ENCODE measurements at regions of chr1 and their contacts with region 1.

Region 1: DNA sequence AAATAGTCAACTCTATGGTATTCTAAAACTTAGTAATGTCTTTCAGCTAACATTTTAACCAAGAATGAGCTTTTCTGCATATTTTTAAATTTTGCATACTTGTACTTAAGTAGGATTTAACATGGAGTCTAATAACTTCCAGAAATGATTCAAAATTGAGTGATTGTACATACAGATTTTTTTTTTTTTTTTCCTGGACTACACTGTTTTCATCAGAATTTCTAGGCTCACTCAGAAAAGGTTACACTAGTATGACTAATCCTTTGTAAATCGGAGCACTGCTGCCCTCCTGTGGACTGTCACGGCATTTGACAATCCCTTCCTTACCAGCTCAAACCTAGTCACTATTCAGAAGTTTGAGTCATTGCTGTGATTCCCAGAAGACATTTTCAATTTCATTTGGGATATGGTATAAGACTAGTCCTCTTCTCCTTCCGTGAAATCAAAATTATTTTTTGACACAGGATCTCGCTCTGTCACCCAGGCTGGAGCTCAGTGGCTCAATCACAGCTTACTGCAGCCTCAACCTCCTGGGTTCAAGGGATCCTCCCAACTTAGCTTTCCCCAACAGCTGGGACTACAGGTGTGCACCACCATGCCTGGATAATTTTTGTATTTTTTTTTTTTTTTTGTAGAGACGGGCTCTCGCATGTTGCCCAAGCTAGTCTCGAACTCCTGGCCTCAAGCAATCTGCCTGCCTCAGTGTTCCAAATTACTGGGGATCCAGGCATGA is 45.5 kb downstream of the CD46 start:
- DNase-seq: peak; percentile 59 to 87 (median 74)
- ATAC-seq: peak; percentile 90
- H3K4me3 ChIP-seq: no peak overlapping the region
- H3K4me3 Mint-ChIP-seq: no peak overlapping the region
- H3K27ac ChIP-seq: no peak overlapping the region
- H3K27ac Mint-ChIP-seq: peak overlapping the region; percentile 50
- H3K4me1 ChIP-seq: peaks cover 24% of the 10 kb centered on the region
- H3K4me1 Mint-ChIP-seq: peaks cover 50% of the 10 kb centered on the region
- H3K27me3 ChIP-seq: no peaks in the 10 kb centered on the region
- H3K27me3 Mint-ChIP-seq: no peaks in the 10 kb centered on the region
- CTCF ChIP-seq: peak; percentile 85

Region 2: GRCh38 chr1:207711285-207711684 is 86.1 kb before region 1 on chr1:
- CTCF ChIA-PET with region 1: interaction called, 10 read pairs
- POLR2A ChIA-PET with region 1: interaction called, 4 read pairs
- intact Hi-C with region 1: loop called (anchors 2 to 5 kb)
- DNase-seq: peak in 3 of 14 experiments; percentile 2 to 15 (median 14)
- ATAC-seq: no peak
- H3K4me3 ChIP-seq: no peak overlapping the region
- H3K4me3 Mint-ChIP-seq: no peak overlapping the region
- H3K27ac ChIP-seq: no peak overlapping the region
- H3K27ac Mint-ChIP-seq: no peak overlapping the region
- H3K4me1 ChIP-seq: no peaks in the 10 kb centered on the region
- H3K4me1 Mint-ChIP-seq: no peaks in the 10 kb centered on the region
- H3K27me3 ChIP-seq: no peaks in the 10 kb centered on the region
- H3K27me3 Mint-ChIP-seq: no peaks in the 10 kb centered on the region
- CTCF ChIP-seq: no peak

Region 3: GRCh38 chr1:207766569-207766968 is 30.8 kb before region 1 on chr1:
- CTCF ChIA-PET with region 1: no interaction called
- POLR2A ChIA-PET with region 1: no interaction called
- intact Hi-C with region 1: no loop called
- DNase-seq: no peak
- ATAC-seq: no peak
- H3K4me3 ChIP-seq: no peak overlapping the region
- H3K4me3 Mint-ChIP-seq: no peak overlapping the region
- H3K27ac ChIP-seq: no peak overlapping the region
- H3K27ac Mint-ChIP-seq: no peak overlapping the region
- H3K4me1 ChIP-seq: no peaks in the 10 kb centered on the region
- H3K4me1 Mint-ChIP-seq: peaks cover 14% of the 10 kb centered on the region
- H3K27me3 ChIP-seq: no peaks in the 10 kb centered on the region
- H3K27me3 Mint-ChIP-seq: no peaks in the 10 kb centered on the region
- CTCF ChIP-seq: no peak

Region 4: GRCh38 chr1:207811920-207812720 is 14.7 kb after region 1 on chr1:
- CTCF ChIA-PET with region 1: interaction called, 19 read pairs
- POLR2A ChIA-PET with region 1: no interaction called
- intact Hi-C with region 1: no loop called
- DNase-seq: peak in 1 of 14 experiments; percentile 34
- ATAC-seq: no peak
- H3K4me3 ChIP-seq: no peak overlapping the region
- H3K4me3 Mint-ChIP-seq: peak overlapping the region; percentile 4
- H3K27ac ChIP-seq: no peak overlapping the region
- H3K27ac Mint-ChIP-seq: peak overlapping the region; percentile 80
- H3K4me1 ChIP-seq: peaks cover 80% of the 10 kb centered on the region
- H3K4me1 Mint-ChIP-seq: peaks cover 84% of the 10 kb centered on the region
- H3K27me3 ChIP-seq: no peaks in the 10 kb centered on the region
- H3K27me3 Mint-ChIP-seq: no peaks in the 10 kb centered on the region
- CTCF ChIP-seq: peak; percentile 23

Region 5: DNA sequence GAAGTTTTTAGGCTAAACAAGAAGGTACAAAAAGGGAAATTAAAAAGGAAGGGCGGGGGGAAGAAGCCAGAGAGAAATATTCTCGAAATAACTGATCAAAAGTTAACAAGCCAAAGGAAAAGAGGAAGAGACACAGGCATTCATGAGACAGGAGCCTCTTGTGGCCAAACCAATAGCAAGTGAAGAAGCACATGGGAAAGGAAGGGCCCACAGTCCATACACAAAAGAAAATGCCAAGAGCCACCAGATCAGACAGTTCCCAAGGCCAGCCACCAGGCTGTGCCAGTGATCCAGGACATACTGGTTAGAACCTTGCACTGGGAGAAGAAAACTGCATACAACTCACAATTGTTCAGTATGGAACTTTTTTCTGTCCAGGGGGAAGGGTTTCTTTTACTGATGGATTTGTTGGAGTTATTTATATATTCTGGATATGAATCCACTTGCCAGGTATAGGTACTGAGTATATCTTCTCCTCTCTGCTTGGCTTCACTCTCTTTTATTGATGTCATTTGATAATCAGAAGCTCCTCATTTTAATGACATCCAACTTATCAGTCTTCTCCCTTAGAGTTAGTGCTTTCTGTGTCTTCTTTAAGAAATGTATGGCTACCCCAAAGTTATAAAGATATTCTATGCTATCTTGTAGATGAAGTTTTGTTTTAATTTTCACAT is 31.2 kb after region 1 on chr1:
- CTCF ChIA-PET with region 1: interaction called, 26 read pairs
- POLR2A ChIA-PET with region 1: interaction called, 31 read pairs
- intact Hi-C with region 1: no loop called
- DNase-seq: peak; percentile 29 to 87 (median 58)
- ATAC-seq: peak; percentile 22
- H3K4me3 ChIP-seq: no peak overlapping the region
- H3K4me3 Mint-ChIP-seq: no peak overlapping the region
- H3K27ac ChIP-seq: peak overlapping the region in 1 of 2 donors; percentile 7
- H3K27ac Mint-ChIP-seq: peak overlapping the region; percentile 95
- H3K4me1 ChIP-seq: peaks cover 75% of the 10 kb centered on the region
- H3K4me1 Mint-ChIP-seq: peaks cover 96% of the 10 kb centered on the region
- H3K27me3 ChIP-seq: no peaks in the 10 kb centered on the region
- H3K27me3 Mint-ChIP-seq: peaks cover 5% of the 10 kb centered on the region
- CTCF ChIP-seq: peak; percentile 66

Region 6: GRCh38 chr1:207963427-207964194 is 166.2 kb after region 1 on chr1:
- CTCF ChIA-PET with region 1: interaction called, 8 read pairs
- POLR2A ChIA-PET with region 1: interaction called, 8 read pairs
- intact Hi-C with region 1: loop called in 1 of 2 experiments (anchors 2 kb)
- DNase-seq: peak; percentile 61 to 92 (median 79)
- ATAC-seq: peak; percentile 90
- H3K4me3 ChIP-seq: peak overlapping the region; percentile 86
- H3K4me3 Mint-ChIP-seq: peak overlapping the region; percentile 79
- H3K27ac ChIP-seq: no peak overlapping the region
- H3K27ac Mint-ChIP-seq: no peak overlapping the region
- H3K4me1 ChIP-seq: peaks cover 23% of the 10 kb centered on the region
- H3K4me1 Mint-ChIP-seq: peaks cover 8% of the 10 kb centered on the region
- H3K27me3 ChIP-seq: peaks cover 15 to 27% of the 10 kb centered on the region in 2 experiments
- H3K27me3 Mint-ChIP-seq: peaks cover 31% of the 10 kb centered on the region
- CTCF ChIP-seq: peak; percentile 97